ENCODE measurements at regions of chr2 and their contacts with region 1.

Region 1: DNA sequence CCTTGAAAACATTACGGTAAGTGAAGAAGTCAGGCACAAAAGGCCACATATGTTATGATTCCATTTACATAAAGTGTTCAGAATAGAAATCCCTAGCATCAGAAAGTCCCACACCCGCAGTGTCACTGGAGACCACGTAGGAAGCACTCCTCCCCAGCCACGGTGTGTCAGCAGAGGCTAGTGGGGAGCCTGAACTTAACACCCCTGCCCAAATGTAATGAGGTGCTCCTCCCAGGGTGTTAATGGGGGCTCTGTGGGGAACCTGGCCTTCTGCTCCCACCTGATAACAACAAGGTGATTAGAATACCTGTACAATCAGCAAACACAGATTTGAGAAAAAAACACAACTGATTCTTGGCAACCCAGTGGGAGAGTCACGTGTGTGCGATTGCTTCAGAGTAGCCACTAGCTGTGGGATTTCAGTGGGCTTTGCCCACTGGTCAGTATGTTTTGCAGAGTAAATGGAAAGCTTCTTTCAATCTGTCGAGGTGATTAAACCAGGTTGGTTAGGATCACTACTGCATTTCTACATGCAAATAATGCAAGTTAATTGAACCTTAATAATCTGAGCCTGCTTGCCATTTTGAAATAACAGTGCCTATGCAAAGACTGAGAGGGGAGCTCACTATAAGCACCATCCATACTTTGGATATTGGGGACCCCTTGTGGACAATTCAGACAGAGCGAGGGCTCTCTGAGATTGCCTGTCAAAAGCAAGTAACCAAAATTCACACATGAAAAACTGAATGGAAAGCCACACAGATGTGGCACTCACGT is 20.6 kb upstream of the ATRAID start:
- DNase-seq: peak; percentile 57
- ATAC-seq: peak; percentile 87
- H3K4me3 Mint-ChIP-seq: no peak overlapping the region
- H3K27ac Mint-ChIP-seq: no peak overlapping the region
- H3K4me1 Mint-ChIP-seq: no peaks in the 10 kb centered on the region
- H3K27me3 Mint-ChIP-seq: peaks cover 2% of the 10 kb centered on the region

Region 2: DNA sequence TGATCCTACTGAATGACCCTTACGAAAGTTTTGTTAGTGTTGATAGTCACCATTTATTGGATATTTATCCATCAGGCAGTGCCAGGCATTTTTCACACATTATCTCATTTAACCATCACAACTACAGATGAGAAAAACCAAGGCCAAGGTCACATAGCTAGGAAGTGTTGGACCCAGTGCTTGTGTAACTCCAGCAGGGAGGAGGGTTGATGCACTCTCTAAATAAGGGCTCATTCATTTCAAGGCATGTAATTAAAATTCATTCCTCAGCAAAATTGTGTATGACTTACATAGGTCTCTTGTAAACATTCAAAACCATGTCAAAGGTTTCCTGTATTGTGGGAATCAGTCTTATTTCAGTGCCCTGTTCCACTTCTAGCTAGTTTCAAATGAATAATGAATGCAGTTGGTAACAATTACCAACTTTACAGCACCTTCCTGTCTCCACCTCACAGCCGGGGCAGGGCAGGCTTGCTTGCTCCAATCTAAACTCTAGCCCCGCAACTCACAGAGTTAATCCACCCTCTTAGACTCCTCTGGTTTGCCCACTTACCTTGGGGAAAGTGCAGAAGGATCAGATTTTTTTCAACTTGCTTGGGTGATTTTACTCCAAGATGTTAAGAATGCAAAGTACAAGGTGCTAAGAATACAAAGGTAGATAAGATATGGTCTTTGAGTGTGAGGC is 226.7 kb before region 1 on chr2:
- CTCF ChIA-PET with region 1: interaction called, 5 read pairs
- POLR2A ChIA-PET with region 1: no interaction called
- intact Hi-C with region 1: loop called (anchors 2 to 5 kb)
- DNase-seq: no peak
- ATAC-seq: no peak
- H3K4me3 Mint-ChIP-seq: no peak overlapping the region
- H3K27ac Mint-ChIP-seq: no peak overlapping the region
- H3K4me1 Mint-ChIP-seq: peaks cover 5% of the 10 kb centered on the region
- H3K27me3 Mint-ChIP-seq: peaks cover 28% of the 10 kb centered on the region

Region 3: DNA sequence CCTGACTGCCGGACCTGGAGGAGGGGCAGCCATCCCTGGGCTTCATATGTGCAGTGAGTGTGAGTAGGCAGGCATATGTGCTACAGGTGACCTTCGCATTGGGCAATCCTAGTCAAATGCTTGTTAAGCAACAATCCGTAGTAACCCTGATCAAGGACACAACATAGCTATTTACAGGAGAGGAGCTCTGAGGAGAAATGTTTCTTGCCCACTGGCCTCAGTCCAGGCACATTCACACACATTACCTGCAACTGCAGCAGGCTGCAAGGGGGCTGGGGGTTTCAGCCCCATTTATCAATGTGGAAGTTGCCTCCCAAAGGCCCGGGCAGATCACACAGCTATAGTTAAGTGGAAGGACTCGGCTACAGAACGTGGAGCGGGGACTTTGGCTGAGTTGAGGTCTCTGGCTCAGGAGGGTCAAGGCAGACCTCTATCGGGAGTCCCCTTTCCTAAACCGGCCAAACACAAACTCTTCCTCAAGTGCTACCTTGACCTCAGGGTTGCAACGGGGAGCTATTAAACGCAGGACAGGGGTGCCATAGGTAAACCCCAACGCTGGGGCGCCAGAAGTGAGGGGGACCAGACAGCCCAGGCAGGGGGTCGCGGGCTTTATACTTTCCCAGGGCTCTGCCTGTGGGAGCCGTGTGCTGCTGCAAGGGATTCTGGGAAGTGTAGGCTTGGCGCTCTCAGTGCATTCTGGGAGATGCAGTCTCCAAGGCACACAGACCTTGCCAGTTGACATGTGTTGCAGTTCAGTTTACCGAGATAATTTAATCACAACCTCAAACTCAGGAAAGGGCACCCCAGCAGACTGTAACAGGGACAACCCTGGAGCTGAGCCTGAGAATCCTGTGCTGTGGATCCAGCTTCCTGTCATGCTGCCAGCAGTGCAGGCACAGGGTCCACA is 95.2 kb before region 1 on chr2:
- CTCF ChIA-PET with region 1: interaction called, 8 read pairs
- POLR2A ChIA-PET with region 1: interaction called, 4 read pairs
- intact Hi-C with region 1: loop called (anchors 1 to 5 kb)
- DNase-seq: peak; percentile 72
- ATAC-seq: peak; percentile 98
- H3K4me3 Mint-ChIP-seq: peak overlapping the region; percentile 35
- H3K27ac Mint-ChIP-seq: peak overlapping the region; percentile 30
- H3K4me1 Mint-ChIP-seq: peaks cover 10% of the 10 kb centered on the region
- H3K27me3 Mint-ChIP-seq: no peaks in the 10 kb centered on the region

Region 4: DNA sequence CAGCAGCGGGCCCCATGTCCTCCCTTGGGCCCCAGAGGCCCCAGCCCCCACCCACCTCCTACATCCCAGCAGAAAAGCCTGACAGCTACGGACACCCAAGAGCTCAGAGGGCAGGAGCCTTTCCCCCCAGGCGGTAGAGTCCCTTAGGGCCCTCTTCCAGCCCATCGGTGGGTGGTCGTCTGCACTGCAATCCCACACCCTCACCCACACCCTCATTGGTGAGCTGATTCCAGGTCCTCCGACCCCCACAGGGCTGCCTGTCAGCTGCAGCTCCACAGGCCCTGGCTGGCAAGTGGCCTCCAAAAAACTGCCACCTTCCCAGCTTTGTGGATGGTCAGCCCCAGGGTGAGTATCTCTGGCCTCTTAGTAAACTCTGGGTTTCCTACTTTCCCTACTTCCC is 32.0 kb before region 1 on chr2:
- CTCF ChIA-PET with region 1: no interaction called
- POLR2A ChIA-PET with region 1: no interaction called
- intact Hi-C with region 1: no loop called
- DNase-seq: no peak
- ATAC-seq: no peak
- H3K4me3 Mint-ChIP-seq: no peak overlapping the region
- H3K27ac Mint-ChIP-seq: no peak overlapping the region
- H3K4me1 Mint-ChIP-seq: no peaks in the 10 kb centered on the region
- H3K27me3 Mint-ChIP-seq: no peaks in the 10 kb centered on the region

Region 5: GRCh38 chr2:27807476-27807875 is 616.2 kb after region 1 on chr2:
- CTCF ChIA-PET with region 1: no interaction called
- POLR2A ChIA-PET with region 1: no interaction called
- intact Hi-C with region 1: no loop called
- DNase-seq: peak; percentile 42
- ATAC-seq: no peak
- H3K4me3 Mint-ChIP-seq: no peak overlapping the region
- H3K27ac Mint-ChIP-seq: no peak overlapping the region
- H3K4me1 Mint-ChIP-seq: peaks cover 8% of the 10 kb centered on the region
- H3K27me3 Mint-ChIP-seq: no peaks in the 10 kb centered on the region